Right ventricle myocardium superior (tissue), 1 donor: ENCODE measurements at regions of chrX and their contacts with region 1.

Region 1: DNA sequence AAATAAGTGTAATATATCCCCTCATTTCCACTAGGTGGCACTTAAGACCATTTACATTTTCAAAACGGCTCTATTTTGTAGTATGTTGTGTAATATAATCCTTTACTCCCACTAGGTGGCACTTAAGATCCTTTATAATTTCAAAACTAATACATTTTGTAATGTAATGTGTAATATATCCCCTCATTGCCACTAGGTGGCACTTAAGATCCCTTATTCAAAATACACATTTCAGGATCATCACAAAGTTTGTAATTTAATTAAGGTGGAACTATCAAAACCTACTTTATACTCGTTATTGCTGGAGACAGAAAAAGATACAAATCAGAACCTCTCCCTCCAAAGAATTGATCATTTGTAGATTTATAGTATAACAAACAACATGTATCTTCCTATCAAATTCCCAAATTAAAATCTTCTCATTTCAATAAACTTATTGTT is 132.5 kb downstream of the ARHGAP6 start:
- DNase-seq: no peak
- ATAC-seq: peak; percentile 92

Region 2: DNA sequence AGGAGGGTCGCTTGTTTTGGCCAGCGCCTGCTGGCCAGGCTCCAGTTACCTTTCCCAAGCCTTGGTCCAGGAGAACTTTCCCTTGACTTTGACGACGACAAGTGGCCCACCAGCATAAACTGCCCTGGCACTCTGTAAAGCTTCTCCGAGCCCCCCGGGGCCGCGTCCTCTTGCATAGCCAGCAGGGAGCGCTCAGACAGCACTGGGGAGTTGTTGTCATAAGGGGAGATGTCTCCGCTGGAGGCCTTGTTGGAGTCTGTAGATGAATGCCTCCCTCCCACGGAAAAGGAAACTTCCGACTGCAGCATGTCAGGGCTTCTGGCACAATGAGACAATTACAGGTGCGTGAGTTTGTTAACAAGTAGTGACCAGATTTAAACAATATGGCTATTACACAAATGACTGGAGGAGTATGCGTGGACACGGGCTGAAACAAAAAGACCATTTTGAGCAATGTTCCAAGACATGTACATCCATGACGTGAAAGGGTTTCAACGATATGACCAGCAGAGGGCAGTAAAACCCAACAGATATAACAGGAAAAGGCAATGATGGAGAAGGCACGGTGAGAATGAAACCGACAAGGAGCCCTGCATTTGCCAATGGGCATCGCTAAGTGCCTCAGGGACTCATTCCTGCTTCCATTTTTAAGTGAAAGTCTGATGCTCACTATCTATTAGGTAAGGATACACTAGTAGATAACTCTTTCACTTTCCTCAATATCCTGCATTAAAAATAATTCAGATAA is 389.1 kb before region 1 on chrX:
- intact Hi-C with region 1: loop called (anchors 10 kb)
- DNase-seq: no peak
- ATAC-seq: peak; percentile 67

Region 3: DNA sequence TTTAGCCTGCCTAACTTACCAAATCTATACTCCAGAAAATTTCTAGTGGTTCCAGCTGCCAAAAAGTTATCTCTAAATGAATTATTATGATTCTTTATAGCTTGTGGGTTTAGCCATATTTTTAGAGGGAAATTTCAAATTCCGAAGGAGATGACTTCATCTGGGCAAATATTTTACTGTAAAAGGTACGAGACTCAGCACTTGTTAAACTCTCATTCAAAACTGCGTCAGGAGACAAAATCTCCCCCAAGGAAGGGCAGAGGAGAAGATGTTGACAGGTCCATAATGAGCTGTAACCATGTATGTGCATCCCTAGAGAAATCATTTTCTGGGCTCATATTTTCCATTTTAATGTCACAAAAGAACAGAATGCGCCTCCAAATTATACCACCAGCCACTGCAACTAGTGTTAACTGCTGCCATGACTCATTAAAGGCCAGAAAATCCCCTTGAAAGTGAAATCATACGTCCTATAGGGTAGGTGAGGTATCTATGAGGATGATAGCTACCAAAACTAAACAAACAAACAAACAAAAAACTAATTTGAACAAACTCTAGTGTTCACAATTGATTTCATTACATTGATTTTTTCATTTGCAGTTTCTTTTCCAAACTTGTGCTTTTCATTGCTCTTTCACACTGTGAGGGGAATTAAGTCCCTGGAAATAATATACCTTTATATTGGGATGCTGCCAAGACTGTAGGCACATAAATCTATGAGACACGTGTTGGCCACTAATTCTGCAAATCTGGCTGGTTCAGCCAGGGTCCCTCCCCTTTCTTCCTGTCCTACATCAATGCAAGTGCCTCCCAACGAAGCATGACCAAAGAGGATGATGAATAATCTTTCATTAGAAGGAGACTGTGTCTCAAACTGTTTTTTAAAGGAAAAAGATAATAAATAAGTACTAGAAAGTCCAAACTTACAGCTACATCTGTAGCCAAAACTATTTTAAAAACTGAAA is 46.7 kb after region 1 on chrX:
- intact Hi-C with region 1: no loop called
- DNase-seq: no peak
- ATAC-seq: no peak

Region 4: GRCh38 chrX:11724122-11725017 is 191.1 kb after region 1 on chrX:
- intact Hi-C with region 1: loop called (anchors 5 kb)
- DNase-seq: no peak
- ATAC-seq: no peak

Region 5: DNA sequence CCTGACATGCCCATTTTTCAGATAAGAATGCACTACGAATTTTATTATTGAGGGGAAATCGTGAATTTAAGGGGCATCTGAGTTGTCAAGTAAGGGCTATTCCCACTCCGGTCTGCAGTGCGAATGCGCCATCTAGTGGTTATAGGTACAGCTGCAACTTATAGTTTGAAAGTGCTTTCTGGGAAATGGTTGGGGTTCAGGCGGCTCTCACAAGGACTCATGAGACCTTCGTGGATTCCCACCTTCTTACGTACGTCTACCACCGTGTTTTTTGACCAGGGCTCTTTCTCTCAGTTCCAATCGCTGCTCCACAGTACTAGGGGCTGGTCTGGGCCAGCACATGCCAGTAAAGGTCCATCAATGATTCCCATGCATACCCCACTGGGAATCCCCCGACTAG is 237.1 kb after region 1 on chrX:
- intact Hi-C with region 1: loop called (anchors 5 kb)
- DNase-seq: peak; percentile 43
- ATAC-seq: peak; percentile 73